ENCODE measurements at regions of chr16 and their contacts with region 1.

Region 1: GRCh38 chr16:13919683-13920509 is at the start of gene ERCC4:
- DNase-seq: peak; percentile 100
- ATAC-seq: peak; percentile 99
- H3K4me3 Mint-ChIP-seq: peak within 1 kb of the TSS; percentile 98
- H3K27ac Mint-ChIP-seq: peak within 1 kb of the TSS; percentile 76
- H3K4me1 Mint-ChIP-seq: peaks cover 17% of the 10 kb centered on the region
- H3K27me3 Mint-ChIP-seq: no peaks in the 10 kb centered on the region; the same call in 1 of the 2 replicates
- CTCF ChIP-seq: peak; percentile 85
- total RNA-seq, gene ERCC4: 12.1 to 15.7 TPM (median 13.4 TPM) in 3 replicates

Region 2: DNA sequence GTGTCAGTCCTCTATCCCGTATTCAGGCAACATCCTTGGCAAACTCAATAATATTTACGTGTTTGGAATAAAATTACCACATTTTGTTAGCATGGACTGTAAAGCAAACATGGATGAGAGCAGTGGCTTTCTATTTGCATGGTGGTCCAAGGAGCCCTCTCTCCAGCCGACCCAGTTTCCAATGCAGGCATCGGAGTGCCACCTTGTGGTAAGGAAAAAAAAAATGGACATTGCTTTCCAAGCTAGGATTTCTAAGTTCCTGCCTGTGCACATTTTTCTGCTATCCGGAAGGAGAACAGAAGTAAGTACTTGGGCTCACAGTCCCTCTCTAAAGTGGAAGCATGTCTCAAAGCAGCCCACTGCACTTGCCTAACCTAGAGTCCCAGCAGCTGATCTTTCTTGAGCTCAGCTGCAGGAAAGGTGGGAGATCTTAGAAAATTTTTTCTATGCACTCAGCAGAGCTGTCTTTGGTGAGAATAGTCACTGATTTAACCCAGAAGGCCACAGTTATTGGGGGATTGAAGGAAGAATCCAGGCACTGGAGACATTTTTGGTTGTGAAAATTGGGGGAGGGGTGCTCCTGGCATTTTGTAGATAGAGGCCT is 46.0 kb before region 1 on chr16:
- CTCF ChIA-PET with region 1: interaction called, 14 read pairs
- POLR2A ChIA-PET with region 1: no interaction called
- DNase-seq: peak; percentile 36
- ATAC-seq: peak; percentile 75
- H3K4me3 Mint-ChIP-seq: no peak overlapping the region
- H3K27ac Mint-ChIP-seq: no peak overlapping the region
- H3K4me1 Mint-ChIP-seq: no peaks in the 10 kb centered on the region
- H3K27me3 Mint-ChIP-seq: no peaks in the 10 kb centered on the region; the same call in none of the 2 replicates
- CTCF ChIP-seq: peak; percentile 42

Region 3: DNA sequence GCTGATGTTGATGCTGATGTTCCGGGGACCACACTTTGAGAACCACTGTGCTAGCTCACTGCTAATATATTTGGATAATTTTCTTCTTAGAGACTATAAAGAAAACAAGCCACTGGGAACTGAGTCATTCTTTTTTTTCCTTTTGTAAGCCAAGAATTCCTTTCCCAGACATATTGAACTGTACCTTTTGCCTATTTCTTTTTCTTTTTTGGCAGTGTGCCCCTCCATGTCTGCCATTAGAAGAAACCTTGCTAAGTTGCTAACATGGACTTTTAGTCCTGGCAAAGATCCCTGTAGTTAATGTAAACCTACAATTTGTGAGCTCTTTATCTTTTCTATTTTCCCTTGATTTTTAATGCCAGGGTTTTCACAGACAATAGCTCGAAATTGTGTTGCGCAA is 17.2 kb before region 1 on chr16:
- CTCF ChIA-PET with region 1: interaction called, 24 read pairs
- POLR2A ChIA-PET with region 1: no interaction called
- DNase-seq: no peak
- ATAC-seq: no peak
- H3K4me3 Mint-ChIP-seq: no peak overlapping the region
- H3K27ac Mint-ChIP-seq: no peak overlapping the region
- H3K4me1 Mint-ChIP-seq: no peaks in the 10 kb centered on the region
- H3K27me3 Mint-ChIP-seq: peaks cover 6% of the 10 kb centered on the region
- CTCF ChIP-seq: no peak

Region 4: DNA sequence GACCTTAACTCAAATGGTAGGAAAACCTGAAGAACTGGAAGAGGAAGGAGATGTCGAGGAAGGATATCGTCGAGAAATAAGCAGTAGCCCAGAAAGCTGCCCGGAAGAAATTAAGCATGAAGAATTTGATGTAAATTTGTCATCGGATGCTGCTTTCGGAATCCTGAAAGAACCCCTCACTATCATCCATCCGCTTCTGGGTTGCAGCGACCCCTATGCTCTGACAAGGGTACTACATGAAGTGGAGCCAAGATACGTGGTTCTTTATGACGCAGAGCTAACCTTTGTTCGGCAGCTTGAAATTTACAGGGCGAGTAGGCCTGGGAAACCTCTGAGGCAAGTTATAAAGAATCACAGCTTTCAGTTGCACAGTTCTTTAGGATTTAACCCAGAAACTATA is 15.5 kb after region 1 on chr16:
- CTCF ChIA-PET with region 1: interaction called, 68 read pairs
- POLR2A ChIA-PET with region 1: interaction called, 3 read pairs
- DNase-seq: peak; percentile 79
- ATAC-seq: peak; percentile 88
- H3K4me3 Mint-ChIP-seq: no peak overlapping the region
- H3K27ac Mint-ChIP-seq: no peak overlapping the region
- H3K4me1 Mint-ChIP-seq: no peaks in the 10 kb centered on the region
- H3K27me3 Mint-ChIP-seq: no peaks in the 10 kb centered on the region
- CTCF ChIP-seq: peak; percentile 94

Region 5: DNA sequence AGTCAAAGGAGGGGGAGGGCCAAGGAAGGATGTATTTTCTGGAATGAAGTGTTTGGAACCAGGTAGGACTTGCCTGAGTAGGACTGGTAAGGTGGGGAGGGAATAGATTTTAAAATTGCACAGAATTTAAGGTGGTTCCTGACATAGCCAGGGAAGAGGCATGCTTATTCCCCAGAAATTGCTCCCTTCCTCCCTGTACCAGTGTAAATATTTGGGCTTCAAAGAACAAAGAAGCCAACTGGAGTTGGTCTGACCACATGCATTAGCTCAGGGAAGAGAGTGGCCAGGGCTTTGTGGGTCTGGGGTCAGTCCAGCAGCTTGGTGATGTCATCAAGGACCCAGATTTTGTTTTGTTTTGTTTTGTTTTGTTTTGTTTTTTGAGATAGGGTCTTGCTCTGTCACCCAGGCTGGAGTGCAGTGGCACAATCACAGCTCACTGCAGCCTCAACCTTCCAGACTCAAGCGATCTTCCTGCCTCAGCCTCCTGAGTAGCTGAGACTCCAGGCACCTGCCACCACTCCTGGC is 141.9 kb after region 1 on chr16:
- CTCF ChIA-PET with region 1: interaction called, 11 read pairs
- POLR2A ChIA-PET with region 1: no interaction called
- DNase-seq: no peak
- ATAC-seq: no peak
- H3K4me3 Mint-ChIP-seq: no peak overlapping the region
- H3K27ac Mint-ChIP-seq: no peak overlapping the region
- H3K4me1 Mint-ChIP-seq: no peaks in the 10 kb centered on the region
- H3K27me3 Mint-ChIP-seq: no peaks in the 10 kb centered on the region; the same call in none of the 2 replicates
- CTCF ChIP-seq: no peak

Region 6: GRCh38 chr16:14285513-14286385 is 365.9 kb after region 1 on chr16:
- CTCF ChIA-PET with region 1: interaction called, 50 read pairs
- POLR2A ChIA-PET with region 1: no interaction called
- DNase-seq: peak; percentile 95
- ATAC-seq: peak; percentile 74
- H3K4me3 Mint-ChIP-seq: peak overlapping the region; percentile 84
- H3K27ac Mint-ChIP-seq: no peak overlapping the region
- H3K4me1 Mint-ChIP-seq: peaks cover 35% of the 10 kb centered on the region
- H3K27me3 Mint-ChIP-seq: no peaks in the 10 kb centered on the region; the same call in none of the 2 replicates
- CTCF ChIP-seq: no peak

Region 7: DNA sequence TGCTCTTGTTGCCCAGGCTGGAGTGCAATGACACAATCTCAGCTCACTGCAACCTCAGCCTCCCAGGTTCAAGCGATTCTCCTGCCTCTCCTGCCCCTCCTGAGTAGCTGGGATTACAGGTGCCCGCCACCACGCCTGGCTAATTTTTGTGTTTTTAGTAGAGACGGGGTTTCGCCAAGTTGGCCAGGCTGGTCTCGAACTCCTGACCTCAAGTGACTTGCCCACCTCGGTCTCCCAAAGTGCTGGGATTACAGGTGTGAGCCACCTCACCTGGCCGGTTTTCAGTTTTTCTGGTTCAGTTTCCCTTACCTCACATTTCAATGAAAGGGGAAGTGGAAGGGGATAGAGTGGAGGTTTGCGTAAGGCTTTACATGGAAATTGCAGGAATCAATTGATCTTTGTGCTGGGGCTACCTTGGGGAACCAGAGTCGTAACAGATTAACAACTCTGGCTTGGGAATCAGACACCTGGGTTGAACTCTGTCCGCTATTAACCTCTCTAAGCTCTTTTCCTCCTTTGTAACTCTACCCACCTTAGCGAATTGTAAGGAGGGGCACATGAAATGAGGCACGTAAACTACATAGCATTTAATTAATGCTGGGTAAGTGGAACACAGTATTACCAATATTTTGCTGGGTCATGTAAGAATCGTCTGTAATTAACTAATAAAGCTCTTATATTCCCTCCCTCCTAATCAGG is 1478.9 kb after region 1 on chr16:
- CTCF ChIA-PET with region 1: no interaction called
- POLR2A ChIA-PET with region 1: no interaction called
- DNase-seq: no peak
- ATAC-seq: no peak
- H3K4me3 Mint-ChIP-seq: no peak overlapping the region
- H3K27ac Mint-ChIP-seq: peak overlapping the region; percentile 45
- H3K4me1 Mint-ChIP-seq: peaks cover 38% of the 10 kb centered on the region
- H3K27me3 Mint-ChIP-seq: peaks cover 4% of the 10 kb centered on the region
- CTCF ChIP-seq: no peak